Dendritic cell treated with granulocyte-macrophage colony-stimulating factor and Interleukin-4, amounts not matched to agents 40 ng/mL and 50 ng/mL, for 4 days (primary cell): ENCODE measurements at regions of chr4 and their contacts with region 1.

Region 1: DNA sequence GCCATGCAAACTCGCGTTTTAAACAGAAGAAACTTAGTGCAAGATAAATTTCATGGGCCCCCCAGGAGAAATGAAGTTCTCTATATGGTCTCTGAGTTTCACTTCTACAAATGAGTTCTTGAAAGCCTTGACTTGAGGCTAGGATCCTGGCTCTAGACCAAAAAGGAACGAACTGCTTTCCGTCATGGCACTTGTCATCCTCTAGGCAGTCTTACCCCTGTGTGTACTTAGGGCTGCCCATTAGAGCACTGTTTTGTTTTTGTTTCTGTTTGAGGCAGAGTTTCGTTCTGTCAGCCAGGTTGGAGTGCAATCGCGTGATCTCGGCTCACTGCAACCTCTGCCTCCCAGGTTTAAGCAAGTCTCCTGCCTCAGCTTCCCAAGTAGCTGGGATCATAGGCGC is 29.0 kb downstream of the RNF4 start:
- H3K4me3 Mint-ChIP-seq: peak overlapping the region; percentile 58
- H3K27ac Mint-ChIP-seq: peak overlapping the region; percentile 85
- H3K4me1 Mint-ChIP-seq: peaks cover 49% of the 10 kb centered on the region
- H3K27me3 Mint-ChIP-seq: no peaks in the 10 kb centered on the region

Region 2: DNA sequence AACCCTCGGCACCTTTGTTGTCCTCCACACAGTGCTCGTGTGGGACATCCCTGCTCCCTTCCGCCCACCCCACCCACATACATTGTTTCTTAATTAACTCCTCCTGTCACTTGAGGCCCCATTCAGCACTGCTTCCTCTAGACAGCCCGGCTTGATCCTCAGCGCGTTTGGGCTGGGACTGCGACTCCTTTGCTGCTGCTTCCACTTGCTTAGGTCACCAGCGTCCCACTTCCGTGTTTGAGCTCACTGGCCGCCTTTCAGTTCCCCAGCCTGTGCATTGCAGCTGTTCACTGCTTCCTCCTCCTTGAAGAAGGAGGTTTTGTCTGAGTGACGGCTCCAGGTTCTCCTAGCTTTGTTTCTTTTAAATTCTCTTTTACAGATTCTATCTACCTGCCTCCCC is 12.9 kb before region 1 on chr4:
- intact Hi-C with region 1: loop called (anchors 1 kb)
- H3K4me3 Mint-ChIP-seq: peak overlapping the region; percentile 64
- H3K27ac Mint-ChIP-seq: peak overlapping the region; percentile 68
- H3K4me1 Mint-ChIP-seq: peaks cover 85% of the 10 kb centered on the region
- H3K27me3 Mint-ChIP-seq: no peaks in the 10 kb centered on the region